ENCODE measurements at regions of chr11 and their contacts with region 1.

Region 1: DNA sequence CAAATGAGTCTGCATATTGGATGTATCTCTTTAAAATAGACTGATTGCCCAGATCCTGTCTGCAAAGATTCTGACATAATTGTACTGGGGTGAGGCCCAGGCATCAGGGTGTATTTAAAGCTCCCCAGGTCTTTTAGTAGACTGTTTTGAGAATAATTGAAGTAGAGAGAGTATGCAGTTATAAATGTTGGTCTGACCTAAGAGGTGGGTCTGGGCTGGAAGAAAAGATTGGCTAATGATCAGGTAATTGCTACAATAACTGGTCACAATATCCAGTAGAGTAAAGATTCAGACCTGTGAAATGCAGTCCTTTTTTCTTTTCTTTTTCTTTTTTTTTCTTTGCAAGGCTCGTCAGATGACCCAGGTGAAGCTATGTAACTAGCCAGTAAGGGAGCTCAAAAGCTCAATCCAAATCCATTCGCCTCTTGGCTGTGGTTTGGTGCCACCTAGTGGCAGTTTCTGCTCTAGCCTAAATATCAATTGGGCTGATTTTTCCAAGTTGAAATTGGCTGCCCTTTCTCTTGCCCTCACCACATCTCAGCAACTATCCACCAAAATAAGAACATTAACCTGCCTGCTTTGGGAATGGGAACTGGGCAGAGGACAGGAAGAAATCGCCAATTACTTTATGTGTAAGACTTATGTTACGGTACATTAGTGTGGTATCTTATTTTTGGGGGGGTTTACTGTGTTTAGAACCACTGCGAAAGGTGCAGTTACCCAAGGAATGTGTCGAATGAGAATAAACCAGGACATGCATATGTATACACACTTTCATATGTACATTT is 45.9 kb downstream of the ZNF143 start:
- DNase-seq: peak; percentile 72
- ATAC-seq: peak; percentile 93
- H3K4me3 ChIP-seq: no peak overlapping the region
- H3K27ac ChIP-seq: no peak overlapping the region
- H3K4me1 ChIP-seq: peaks cover 9% of the 10 kb centered on the region; the same call in 1 of the 2 replicates
- H3K27me3 ChIP-seq: no peaks in the 10 kb centered on the region
- CTCF ChIP-seq: peak; percentile 99

Region 2: GRCh38 chr11:8732748-8733241 is 773.9 kb before region 1 on chr11:
- CTCF ChIA-PET with region 1: no interaction called
- POLR2A ChIA-PET with region 1: interaction called, 13 read pairs
- in situ Hi-C with region 1: no loop called
- intact Hi-C with region 1: no loop called
- DNase-seq: no peak
- ATAC-seq: peak; percentile 68
- H3K4me3 ChIP-seq: no peak overlapping the region
- H3K27ac ChIP-seq: no peak overlapping the region
- H3K4me1 ChIP-seq: peaks cover 3% of the 10 kb centered on the region; the same call in 1 of the 2 replicates
- H3K27me3 ChIP-seq: no peaks in the 10 kb centered on the region
- CTCF ChIP-seq: no peak

Region 3: DNA sequence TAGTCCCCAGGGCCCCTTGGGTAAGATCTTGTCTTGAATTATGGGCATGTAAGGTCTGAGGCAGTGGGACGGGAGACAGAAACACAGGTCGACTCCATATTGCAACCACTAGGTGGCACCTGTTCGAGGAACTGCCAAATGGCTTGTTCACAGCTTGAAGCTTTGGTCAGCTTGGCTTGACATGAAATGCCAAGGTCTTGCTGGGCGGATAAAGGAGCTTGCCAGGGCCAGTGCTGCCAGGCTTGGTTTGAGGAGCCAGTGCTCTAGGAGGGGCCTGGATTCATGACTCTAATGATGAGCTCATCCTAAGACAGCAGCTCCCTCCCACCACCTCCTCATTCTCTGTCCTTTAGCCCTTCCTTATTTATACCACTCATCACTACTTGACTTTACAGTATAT is 491.0 kb before region 1 on chr11:
- CTCF ChIA-PET with region 1: interaction called, 7 read pairs
- POLR2A ChIA-PET with region 1: no interaction called
- in situ Hi-C with region 1: no loop called
- intact Hi-C with region 1: loop called (anchors 5 kb)
- DNase-seq: peak; percentile 81
- ATAC-seq: peak; percentile 92
- H3K4me3 ChIP-seq: no peak overlapping the region
- H3K27ac ChIP-seq: no peak overlapping the region
- H3K4me1 ChIP-seq: no peaks in the 10 kb centered on the region
- H3K27me3 ChIP-seq: no peaks in the 10 kb centered on the region
- CTCF ChIP-seq: peak; percentile 96

Region 4: DNA sequence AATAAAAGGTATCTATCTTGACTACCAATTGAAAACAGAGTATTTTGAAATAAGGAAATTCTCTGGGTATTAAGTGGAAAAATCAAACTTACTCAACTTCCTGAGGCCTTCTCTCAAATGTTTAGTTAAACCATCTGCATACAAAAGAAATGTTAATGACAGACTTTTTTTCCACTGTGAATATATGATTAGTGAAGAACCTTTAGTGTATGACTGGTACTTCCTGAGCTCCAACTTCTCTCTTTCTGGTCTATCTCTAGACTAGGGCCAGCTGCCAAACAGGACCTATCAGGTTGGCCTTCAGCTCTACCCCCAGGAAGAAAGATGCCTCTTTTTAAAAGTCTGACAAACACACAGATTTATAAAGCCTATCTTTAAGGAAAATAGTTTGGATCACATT is 346.5 kb before region 1 on chr11:
- CTCF ChIA-PET with region 1: no interaction called
- POLR2A ChIA-PET with region 1: interaction called, 3 read pairs
- in situ Hi-C with region 1: no loop called
- intact Hi-C with region 1: loop called (anchors 10 kb)
- DNase-seq: no peak
- ATAC-seq: no peak
- H3K4me3 ChIP-seq: no peak overlapping the region
- H3K27ac ChIP-seq: no peak overlapping the region
- H3K4me1 ChIP-seq: no peaks in the 10 kb centered on the region
- H3K27me3 ChIP-seq: no peaks in the 10 kb centered on the region
- CTCF ChIP-seq: no peak

Region 5: GRCh38 chr11:9448576-9449352 is 57.9 kb before region 1 on chr11:
- CTCF ChIA-PET with region 1: interaction called, 4 read pairs
- POLR2A ChIA-PET with region 1: no interaction called
- in situ Hi-C with region 1: loop called (anchors 5 kb)
- intact Hi-C with region 1: no loop called
- DNase-seq: no peak
- ATAC-seq: no peak
- H3K4me3 ChIP-seq: no peak overlapping the region
- H3K27ac ChIP-seq: no peak overlapping the region
- H3K4me1 ChIP-seq: no peaks in the 10 kb centered on the region
- H3K27me3 ChIP-seq: no peaks in the 10 kb centered on the region
- CTCF ChIP-seq: no peak

Region 6: GRCh38 chr11:9460322-9461067 is 46.2 kb before region 1 on chr11 and contains the start of gene ZNF143:
- CTCF ChIA-PET with region 1: interaction called, 7 read pairs
- POLR2A ChIA-PET with region 1: interaction called, 11 read pairs
- in situ Hi-C with region 1: no loop called
- intact Hi-C with region 1: no loop called
- DNase-seq: peak; percentile 100
- ATAC-seq: peak; percentile 95
- H3K4me3 ChIP-seq: peak within 1 kb of the TSS; percentile 94
- H3K27ac ChIP-seq: peak within 1 kb of the TSS; percentile 100
- H3K4me1 ChIP-seq: peaks cover 23% of the 10 kb centered on the region
- H3K27me3 ChIP-seq: no peaks in the 10 kb centered on the region
- CTCF ChIP-seq: no peak
- total RNA-seq, gene ZNF143: 30.2 TPM

Region 7: GRCh38 chr11:9473408-9473807 is 33.3 kb before region 1 on chr11:
- CTCF ChIA-PET with region 1: no interaction called
- POLR2A ChIA-PET with region 1: interaction called, 18 read pairs
- in situ Hi-C with region 1: no loop called
- intact Hi-C with region 1: no loop called
- DNase-seq: no peak
- ATAC-seq: no peak
- H3K4me3 ChIP-seq: no peak overlapping the region
- H3K27ac ChIP-seq: no peak overlapping the region
- H3K4me1 ChIP-seq: no peaks in the 10 kb centered on the region
- H3K27me3 ChIP-seq: no peaks in the 10 kb centered on the region
- CTCF ChIP-seq: no peak

Region 8: GRCh38 chr11:10356161-10356560 is 849.5 kb after region 1 on chr11:
- CTCF ChIA-PET with region 1: no interaction called
- POLR2A ChIA-PET with region 1: no interaction called
- in situ Hi-C with region 1: no loop called
- intact Hi-C with region 1: no loop called
- DNase-seq: no peak
- ATAC-seq: no peak
- H3K4me3 ChIP-seq: no peak overlapping the region
- H3K27ac ChIP-seq: no peak overlapping the region
- H3K4me1 ChIP-seq: peaks cover 9% of the 10 kb centered on the region
- H3K27me3 ChIP-seq: no peaks in the 10 kb centered on the region
- CTCF ChIP-seq: no peak

Measured in Panc1 (cell line).